Lower leg skin (tissue), 4 donors: ENCODE measurements at regions of chr7 and their contacts with region 1.

Region 1: DNA sequence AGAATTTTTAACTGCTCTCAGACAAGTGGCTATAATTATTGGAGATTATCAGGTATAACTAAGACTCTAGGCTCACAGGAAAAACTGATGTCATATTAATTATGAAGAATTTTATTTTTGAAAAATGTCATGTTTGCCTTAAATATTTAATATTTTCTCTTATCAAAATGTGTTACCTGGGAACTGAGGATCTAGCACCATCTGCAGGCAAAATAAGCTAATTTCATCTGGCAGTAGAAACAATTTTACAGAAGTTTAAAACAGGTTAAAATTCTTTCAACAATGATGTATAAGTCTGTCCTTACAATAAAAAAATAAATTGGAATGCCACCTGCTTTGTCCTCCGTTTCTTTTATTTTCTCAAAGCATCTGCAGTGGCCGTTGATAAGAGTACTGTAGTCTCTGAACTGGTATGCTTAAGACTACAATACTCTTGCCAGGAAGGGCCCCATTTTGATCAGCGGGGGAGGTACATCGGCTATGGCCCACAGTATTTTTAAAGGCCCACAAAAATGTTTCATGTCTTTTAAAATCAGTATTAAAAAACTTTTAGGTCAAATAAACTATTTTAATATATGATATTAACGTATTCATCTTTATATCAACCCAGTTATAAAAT is 81.3 kb downstream of the VWDE start:
- DNase-seq: no peak
- H3K4me3 ChIP-seq: no peak overlapping the region
- CTCF ChIP-seq: no peak
- POLR2A ChIP-seq: no peak

Region 2: DNA sequence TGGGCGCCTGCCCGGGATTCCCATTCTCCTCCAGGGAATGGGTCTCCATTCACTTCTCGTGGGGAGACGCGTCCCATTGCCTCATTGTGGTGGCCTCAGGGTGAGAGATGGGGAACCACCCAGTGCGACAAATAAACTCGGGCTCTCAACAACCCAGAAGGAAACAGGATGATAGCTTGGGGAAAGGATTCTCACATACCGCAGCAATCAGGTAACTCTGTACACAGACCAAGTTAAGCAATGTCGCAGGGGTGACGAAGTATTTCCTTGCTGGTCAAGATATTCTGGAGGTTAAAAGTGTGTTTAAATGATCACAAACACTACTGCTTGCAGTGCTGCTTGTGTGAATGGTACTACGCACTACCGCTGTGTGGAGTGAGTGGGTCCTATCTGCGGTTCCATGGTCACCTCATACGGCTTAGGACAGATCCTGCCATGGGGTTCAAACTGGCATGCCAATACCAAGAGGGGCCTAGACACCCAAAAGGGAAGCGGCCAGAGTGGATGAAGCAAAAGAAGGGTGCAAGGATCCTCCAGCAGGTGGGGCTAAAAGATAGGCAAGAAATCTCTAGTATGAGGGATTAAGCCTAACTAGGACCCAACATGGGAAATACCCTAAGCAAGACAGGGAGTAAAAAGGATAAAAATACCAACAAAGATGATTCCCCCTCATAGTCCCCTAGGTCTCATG is 255.1 kb before region 1 on chr7:
- intact Hi-C with region 1: loop called (anchors 10 kb)
- DNase-seq: no peak
- H3K4me3 ChIP-seq: no peak overlapping the region
- CTCF ChIP-seq: no peak
- POLR2A ChIP-seq: no peak

Region 3: DNA sequence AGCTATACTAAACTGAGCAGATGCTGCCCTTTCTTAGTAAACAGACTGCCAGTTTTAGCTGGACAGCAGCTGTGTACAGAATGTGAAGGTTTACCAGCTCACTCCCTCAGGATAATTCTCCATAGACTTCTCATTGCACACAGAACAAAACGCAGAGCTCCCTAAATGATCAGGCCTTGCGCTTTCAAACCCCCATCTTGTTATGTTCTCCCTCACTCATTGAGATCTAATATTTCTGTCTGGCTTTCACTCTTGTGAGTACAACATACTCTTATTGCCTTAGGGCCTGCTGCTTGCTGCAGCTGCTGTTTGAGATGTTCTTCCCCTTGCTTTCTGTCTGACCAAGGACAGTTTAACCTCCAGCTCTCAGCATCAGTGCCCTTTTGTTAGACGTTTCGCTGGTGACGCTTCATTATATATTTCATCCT is 63.9 kb after region 1 on chr7:
- intact Hi-C with region 1: no loop called
- DNase-seq: no peak
- H3K4me3 ChIP-seq: no peak overlapping the region
- CTCF ChIP-seq: no peak
- POLR2A ChIP-seq: no peak